CD14-positive monocyte (primary cell): ENCODE measurements at regions of chr11 and their contacts with region 1.

Region 1: DNA sequence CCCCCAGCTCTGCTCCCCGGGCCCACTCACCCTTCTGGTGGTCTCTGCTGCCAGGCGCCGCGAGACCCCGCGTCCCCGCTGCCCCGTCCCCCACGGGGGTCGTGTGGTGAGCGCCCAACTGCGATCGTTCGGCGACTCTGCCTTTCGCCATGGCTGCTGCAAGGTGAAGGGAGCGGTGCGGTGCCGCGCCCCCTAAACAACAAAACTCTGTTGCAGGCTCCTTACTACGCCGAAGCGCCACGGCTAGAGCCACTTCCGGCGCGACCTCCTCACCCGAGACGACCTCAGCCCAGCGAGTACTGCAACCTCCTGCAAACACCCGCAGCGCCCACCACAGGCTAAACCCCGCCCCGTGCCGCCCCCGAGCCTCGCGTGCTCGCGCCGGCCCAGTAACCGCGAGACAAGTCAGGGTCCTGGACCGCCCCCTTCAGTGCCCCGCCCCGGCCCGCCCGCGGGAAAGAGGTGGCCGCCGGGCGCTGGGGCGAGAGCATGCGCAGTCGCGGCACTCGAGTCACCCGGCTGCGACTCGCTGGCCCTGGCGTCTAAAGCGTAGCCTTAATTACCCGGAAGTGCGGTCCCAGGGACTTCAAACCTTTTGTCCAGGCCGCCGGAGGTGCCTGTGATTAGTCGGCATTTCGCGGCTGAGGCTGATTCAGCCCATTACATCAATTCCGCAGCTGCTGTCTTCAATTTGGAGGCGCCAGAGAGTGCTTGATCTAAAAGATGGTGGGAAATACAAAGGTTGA is at the start of gene TMEM41B:
- DNase-seq: peak; percentile 99
- H3K4me3 ChIP-seq: peak within 1 kb of the TSS; percentile 90 to 98 (median 92)
- H3K4me3 Mint-ChIP-seq: peak within 1 kb of the TSS; percentile 96 to 97
- H3K27ac ChIP-seq: peak within 1 kb of the TSS; percentile 58 to 87
- H3K27ac Mint-ChIP-seq: peak within 1 kb of the TSS; percentile 89 to 96 (median 94)
- H3K4me1 ChIP-seq: peaks cover 25 to 26% of the 10 kb centered on the region in 2 donors
- H3K4me1 Mint-ChIP-seq: peaks cover 54% of the 10 kb centered on the region
- H3K27me3 ChIP-seq: no peaks in the 10 kb centered on the region
- H3K27me3 Mint-ChIP-seq: peaks cover 0 to 4% (median 1%) of the 10 kb centered on the region in 3 donors
- CTCF ChIP-seq: peak; percentile 8
- polyA plus RNA-seq, gene TMEM41B: 5.5 to 11.3 (median 5.9) TPM

Region 2: GRCh38 chr11:8688414-8689362 is 625.8 kb before region 1 on chr11:
- intact Hi-C with region 1: loop called in 1 of 2 experiments (anchors 10 kb)
- DNase-seq: peak; percentile 94 to 96 (median 94)
- H3K4me3 ChIP-seq: peak overlapping the region; percentile 60 to 85 (median 73)
- H3K4me3 Mint-ChIP-seq: peak overlapping the region; percentile 96 to 98
- H3K27ac ChIP-seq: peak overlapping the region; percentile 69 to 86
- H3K27ac Mint-ChIP-seq: peak overlapping the region; percentile 92 to 96 (median 95)
- H3K4me1 ChIP-seq: peaks cover 22 to 31% of the 10 kb centered on the region in 2 donors
- H3K4me1 Mint-ChIP-seq: peaks cover 31% of the 10 kb centered on the region
- H3K27me3 ChIP-seq: no peaks in the 10 kb centered on the region
- H3K27me3 Mint-ChIP-seq: no peaks in the 10 kb centered on the region
- CTCF ChIP-seq: no peak

Region 3: DNA sequence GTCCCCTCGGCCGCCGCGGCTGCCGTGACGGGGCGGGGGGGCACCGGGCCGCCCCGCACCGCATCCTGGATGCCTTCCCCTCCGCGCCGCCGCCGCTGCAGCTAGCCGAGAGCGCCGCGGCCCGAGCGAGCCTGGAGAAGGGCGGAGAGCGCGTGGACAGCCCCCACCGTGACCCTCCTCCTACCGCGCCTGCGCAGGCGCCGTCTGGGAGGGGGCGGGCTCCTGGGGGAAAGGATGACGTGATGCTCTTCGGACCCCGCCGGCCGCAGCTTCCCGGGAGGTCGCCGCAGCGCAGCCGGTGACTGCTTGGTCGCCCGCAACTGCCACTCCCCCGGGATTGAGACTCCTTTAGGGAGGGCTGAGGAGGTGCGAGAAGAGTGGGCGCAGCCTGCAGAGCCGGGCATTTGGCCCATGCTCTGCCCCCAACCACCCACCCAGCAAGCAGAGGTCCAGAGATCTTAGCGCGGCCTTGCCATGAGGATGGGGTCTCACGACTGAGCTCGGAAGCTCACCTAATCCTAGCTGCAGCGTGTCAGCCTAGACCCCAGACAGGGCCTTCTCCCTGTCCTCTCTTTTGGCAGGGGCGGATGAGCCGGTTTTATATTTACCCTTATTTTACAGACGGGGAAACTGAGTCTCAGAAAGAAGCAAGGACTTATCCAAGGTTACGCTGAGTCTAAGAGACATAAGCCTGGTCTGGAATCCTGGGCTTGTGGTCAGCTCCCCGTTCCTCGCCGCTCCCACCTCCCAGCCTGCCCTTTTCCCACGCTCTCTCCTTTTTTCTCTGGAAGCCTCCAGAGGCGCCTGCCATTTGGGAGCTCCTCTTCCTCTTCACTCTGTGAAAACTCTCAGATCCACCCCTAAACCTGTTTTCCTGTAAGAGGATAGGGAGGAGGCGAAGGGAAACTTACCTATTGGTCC is 49.0 kb before region 1 on chr11 and contains the start of gene DENND5A:
- intact Hi-C with region 1: loop called (anchors 5 kb)
- DNase-seq: peak; percentile 76 to 90 (median 86)
- H3K4me3 ChIP-seq: peak within 1 kb of the TSS; percentile 75 to 97 (median 97)
- H3K4me3 Mint-ChIP-seq: peak within 1 kb of the TSS; percentile 93 to 99
- H3K27ac ChIP-seq: peak within 1 kb of the TSS; percentile 99 to 100
- H3K27ac Mint-ChIP-seq: peak within 1 kb of the TSS; percentile 100
- H3K4me1 ChIP-seq: peaks cover 18 to 35% of the 10 kb centered on the region in 2 donors
- H3K4me1 Mint-ChIP-seq: peaks cover 30% of the 10 kb centered on the region
- H3K27me3 ChIP-seq: no peaks in the 10 kb centered on the region
- H3K27me3 Mint-ChIP-seq: peaks cover 0 to 15% (median 7%) of the 10 kb centered on the region in 3 donors
- CTCF ChIP-seq: no peak
- polyA plus RNA-seq, gene DENND5A: 24.4 to 291 (median 37.5) TPM

Region 4: DNA sequence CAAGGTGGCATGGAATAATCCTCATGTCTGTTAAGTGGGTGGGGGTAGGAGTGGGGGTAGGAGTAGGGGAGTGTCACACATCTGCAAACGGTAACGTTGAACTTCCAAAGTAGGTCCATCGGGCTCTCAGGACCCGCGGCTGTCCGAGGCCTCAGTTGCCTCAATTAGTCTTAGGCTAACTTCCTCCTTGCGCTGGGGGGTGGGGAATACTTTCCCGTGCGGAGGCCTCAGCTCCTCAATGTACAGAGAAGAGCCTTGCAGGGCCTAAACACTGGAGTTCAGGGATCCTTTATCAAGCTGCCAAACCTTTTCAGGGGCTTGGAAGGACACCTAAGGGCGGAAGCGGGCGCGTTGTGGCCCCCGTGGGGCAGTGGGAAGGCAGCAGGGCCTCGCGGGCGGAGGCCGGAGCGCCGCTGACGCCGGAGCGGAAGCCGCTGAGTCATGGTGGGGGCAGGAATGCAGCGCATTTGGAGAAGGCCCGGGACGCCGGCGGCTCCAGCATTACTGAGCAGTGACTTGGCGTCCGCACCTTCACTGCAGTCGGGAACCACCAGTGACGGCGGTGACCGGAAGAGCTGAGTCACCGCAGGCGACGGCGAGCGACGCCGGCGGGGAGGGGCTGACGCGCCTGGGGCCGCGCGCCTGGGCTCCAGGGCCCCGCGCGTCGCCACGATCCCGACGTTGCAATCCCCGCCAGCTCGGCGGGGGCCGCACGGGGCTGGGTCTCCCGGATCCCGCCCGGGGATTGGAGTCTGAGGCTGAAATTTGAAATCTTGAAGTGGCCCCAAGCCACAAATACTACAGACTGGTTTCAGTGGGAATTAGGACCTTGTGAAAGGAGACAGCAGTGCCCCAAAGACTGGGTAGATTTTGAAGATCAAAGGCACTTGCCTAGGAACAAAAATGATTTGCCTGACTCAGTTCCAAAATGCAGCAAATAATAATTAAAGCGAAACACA is 49.8 kb after region 1 on chr11:
- intact Hi-C with region 1: loop called (anchors 5 kb)
- DNase-seq: peak; percentile 99
- H3K4me3 ChIP-seq: peak overlapping the region; percentile 46 to 71 (median 52)
- H3K4me3 Mint-ChIP-seq: peak overlapping the region; percentile 78 to 90
- H3K27ac ChIP-seq: peak overlapping the region; percentile 98
- H3K27ac Mint-ChIP-seq: peak overlapping the region; percentile 98 to 100 (median 99)
- H3K4me1 ChIP-seq: peaks cover 12 to 15% of the 10 kb centered on the region in 2 donors
- H3K4me1 Mint-ChIP-seq: peaks cover 18% of the 10 kb centered on the region
- H3K27me3 ChIP-seq: no peaks in the 10 kb centered on the region
- H3K27me3 Mint-ChIP-seq: peaks cover 0 to 3% (median 1%) of the 10 kb centered on the region in 3 donors
- CTCF ChIP-seq: no peak

Region 5: GRCh38 chr11:9384535-9385303 is 70.3 kb after region 1 on chr11 and contains the start of gene IPO7:
- intact Hi-C with region 1: loop called (anchors 2 to 5 kb)
- DNase-seq: peak; percentile 84 to 86 (median 85)
- H3K4me3 ChIP-seq: peak within 1 kb of the TSS; percentile 78 to 95 (median 92)
- H3K4me3 Mint-ChIP-seq: peak within 1 kb of the TSS; percentile 96 to 97
- H3K27ac ChIP-seq: peak within 1 kb of the TSS; percentile 95 to 96
- H3K27ac Mint-ChIP-seq: peak within 1 kb of the TSS; percentile 95 to 98 (median 97)
- H3K4me1 ChIP-seq: peaks cover 16 to 38% of the 10 kb centered on the region in 2 donors
- H3K4me1 Mint-ChIP-seq: peaks cover 26% of the 10 kb centered on the region
- H3K27me3 ChIP-seq: no peaks in the 10 kb centered on the region
- H3K27me3 Mint-ChIP-seq: peaks cover 0 to 3% (median 0%) of the 10 kb centered on the region in 3 donors
- CTCF ChIP-seq: peak; percentile 44
- polyA plus RNA-seq, gene IPO7: 7.0 to 12.9 (median 8.1) TPM